ENCODE measurements at regions of chr17 and their contacts with region 1.

Region 1: GRCh38 chr17:67221062-67221998 is 23.7 kb downstream of the HELZ start:
- DNase-seq: peak; percentile 56
- H3K4me3 ChIP-seq: no peak overlapping the region
- H3K27ac ChIP-seq: peak overlapping the region in 1 of 2 experiments; percentile 69; a peak in 2 of 4 replicates
- H3K4me1 ChIP-seq: peaks cover 10 to 17% of the 10 kb centered on the region in 2 experiments; a peak in 2 of 4 replicates
- H3K27me3 ChIP-seq: no peaks in the 10 kb centered on the region
- CTCF ChIP-seq: peak; percentile 53
- EP300 ChIP-seq: 0 out of 4 replicates have a peak, but pooled peaks of 1 of the 2 experiments have one; percentile 41
- RAD21 ChIP-seq: peak; percentile 65

Region 2: GRCh38 chr17:67245073-67245755 is 23.9 kb after region 1 on chr17 and contains the start of gene HELZ:
- CTCF ChIA-PET with region 1: interaction called, 13 read pairs
- POLR2A ChIA-PET with region 1: interaction called, 3 read pairs
- DNase-seq: peak; percentile 98
- H3K4me3 ChIP-seq: peak within 1 kb of the TSS; percentile 92
- H3K27ac ChIP-seq: peak within 1 kb of the TSS; percentile 53 to 85; a peak in 3 of 4 replicates
- H3K4me1 ChIP-seq: peaks cover 9 to 18% of the 10 kb centered on the region in 2 experiments; a peak in 3 of 4 replicates
- H3K27me3 ChIP-seq: no peaks in the 10 kb centered on the region
- CTCF ChIP-seq: no peak
- EP300 ChIP-seq: 0 out of 4 replicates have a peak, but pooled peaks of 1 of the 2 experiments have one; percentile 30
- RAD21 ChIP-seq: peak; percentile 18
- polyA plus RNA-seq, gene HELZ: 4.3 and 5.8 TPM in 2 replicates

Region 3: GRCh38 chr17:67294451-67295199 is 73.3 kb after region 1 on chr17:
- CTCF ChIA-PET with region 1: no interaction called
- POLR2A ChIA-PET with region 1: no interaction called
- DNase-seq: no peak
- H3K4me3 ChIP-seq: no peak overlapping the region
- H3K27ac ChIP-seq: no peak overlapping the region
- H3K4me1 ChIP-seq: no peaks in the 10 kb centered on the region
- H3K27me3 ChIP-seq: no peaks in the 10 kb centered on the region
- CTCF ChIP-seq: no peak
- EP300 ChIP-seq: no peak
- RAD21 ChIP-seq: no peak

Measured in SK-N-SH (cell line).